IMR-90 (cell line): ENCODE measurements at regions of chr17 and their contacts with region 1.

Region 1: DNA sequence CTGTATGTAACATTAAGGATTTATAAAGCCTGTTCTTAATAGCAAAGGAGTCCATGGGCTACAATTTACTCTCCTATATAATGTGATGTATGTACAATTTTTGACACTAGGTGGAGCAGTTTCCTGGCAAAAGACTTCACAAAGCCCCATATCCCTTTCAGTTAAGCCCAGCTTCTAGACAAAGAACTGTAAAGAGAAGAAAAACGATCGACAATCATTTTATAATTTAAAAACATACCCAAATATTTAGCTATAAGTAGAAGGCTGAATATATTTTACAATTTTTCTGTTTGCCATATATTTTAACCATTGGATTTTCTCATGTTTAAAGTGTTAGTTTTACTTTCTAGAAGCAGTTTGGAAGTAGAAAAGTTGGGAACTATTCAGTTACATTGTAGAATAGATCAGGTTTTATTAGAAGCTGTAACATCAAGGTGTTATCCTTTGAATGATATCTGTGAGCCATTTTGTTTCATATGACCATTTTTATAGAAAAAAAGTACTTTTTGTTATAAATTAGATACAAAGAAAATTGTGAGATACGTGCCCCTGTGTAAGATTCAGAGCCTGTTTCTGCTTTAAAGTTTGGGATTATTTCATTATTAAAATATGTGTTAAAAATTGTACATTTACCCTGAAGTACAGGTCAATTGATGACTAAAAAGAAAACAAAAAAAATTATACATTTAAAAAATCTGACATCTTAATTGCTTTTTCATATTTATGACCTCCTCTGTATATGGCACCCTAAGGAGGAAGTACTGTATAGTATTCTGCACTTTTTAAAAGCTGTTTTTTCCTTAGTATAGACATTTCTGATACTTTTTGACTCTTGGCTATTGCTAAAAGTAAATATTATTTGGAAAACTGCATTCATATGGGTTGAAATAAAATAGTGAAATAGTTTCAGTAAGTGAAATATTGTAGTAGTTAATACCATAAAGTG is 46.3 kb downstream of the VMP1 start:
- DNase-seq: peak; percentile 93
- ATAC-seq: peak; percentile 74
- H3K4me3 ChIP-seq: no peak overlapping the region
- H3K27ac ChIP-seq: peak overlapping the region; percentile 78; the same call in 1 of the 2 replicates
- H3K4me1 ChIP-seq: peaks cover 14% of the 10 kb centered on the region
- H3K27me3 ChIP-seq: no peaks in the 10 kb centered on the region
- CTCF ChIP-seq: peak; percentile 81
- POLR2A ChIP-seq: peak; percentile 40; the same call in 1 of the 2 replicates
- RAD21 ChIP-seq: peak; percentile 94

Region 2: DNA sequence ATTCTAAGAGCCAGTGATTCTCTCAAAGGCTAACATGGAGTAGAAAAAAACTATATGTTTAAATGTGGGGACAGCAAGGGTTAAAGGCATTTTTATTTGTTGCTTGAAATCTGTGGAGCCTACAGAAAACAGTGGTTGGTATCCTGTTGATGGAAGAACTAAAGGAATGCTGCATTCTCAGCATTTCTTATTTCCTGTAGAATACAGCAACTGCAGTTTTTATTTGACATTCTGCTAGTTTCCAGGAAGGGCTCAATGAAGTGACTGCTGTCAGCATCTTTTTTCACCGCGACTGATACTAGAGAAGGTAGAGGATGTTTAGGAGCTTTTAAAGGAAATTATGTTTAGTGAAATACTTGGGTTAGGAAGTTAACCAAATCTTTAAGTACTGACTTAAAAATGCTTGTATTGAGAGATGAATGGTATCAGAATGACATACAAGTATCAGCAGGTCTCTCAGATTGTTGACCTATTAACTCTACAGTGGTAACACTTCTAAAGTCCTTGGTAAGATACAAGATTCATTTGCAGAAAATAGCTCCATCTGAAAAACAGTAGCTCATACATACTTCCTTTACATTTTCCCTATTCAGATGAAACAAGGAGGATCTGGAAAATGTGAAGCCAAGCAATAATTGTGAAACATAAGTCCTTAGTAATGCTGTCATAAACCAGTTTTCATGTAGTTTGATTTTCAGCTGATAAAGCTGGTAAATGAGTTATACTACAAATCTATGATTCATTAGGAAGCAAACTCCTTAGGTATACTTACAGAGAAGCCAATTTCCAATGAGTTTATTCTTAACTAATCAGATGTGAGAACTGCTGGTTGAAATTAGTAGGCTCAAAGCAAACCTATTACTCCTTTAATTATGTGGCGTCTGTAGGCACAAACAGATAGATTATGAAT is 118.9 kb before region 1 on chr17:
- CTCF ChIA-PET with region 1: no interaction called
- POLR2A ChIA-PET with region 1: no interaction called
- dilution Hi-C with region 1: no loop called
- in situ Hi-C with region 1: no loop called
- intact Hi-C with region 1: no loop called
- DNase-seq: no peak
- ATAC-seq: peak; percentile 61
- H3K4me3 ChIP-seq: no peak overlapping the region
- H3K27ac ChIP-seq: no peak overlapping the region
- H3K4me1 ChIP-seq: peaks cover 11% of the 10 kb centered on the region
- H3K27me3 ChIP-seq: no peaks in the 10 kb centered on the region
- CTCF ChIP-seq: no peak
- POLR2A ChIP-seq: no peak
- RAD21 ChIP-seq: no peak

Region 3: GRCh38 chr17:59769891-59770290 is 16.1 kb after region 1 on chr17:
- CTCF ChIA-PET with region 1: interaction called, 10 read pairs
- POLR2A ChIA-PET with region 1: no interaction called
- dilution Hi-C with region 1: no loop called
- in situ Hi-C with region 1: no loop called
- intact Hi-C with region 1: no loop called
- DNase-seq: no peak
- ATAC-seq: no peak
- H3K4me3 ChIP-seq: no peak overlapping the region
- H3K27ac ChIP-seq: no peak overlapping the region
- H3K4me1 ChIP-seq: peaks cover 19% of the 10 kb centered on the region
- H3K27me3 ChIP-seq: no peaks in the 10 kb centered on the region
- CTCF ChIP-seq: no peak
- POLR2A ChIP-seq: no peak
- RAD21 ChIP-seq: no peak

Region 4: GRCh38 chr17:59846394-59847165 is 92.8 kb after region 1 on chr17:
- CTCF ChIA-PET with region 1: no interaction called
- POLR2A ChIA-PET with region 1: interaction called, 87 read pairs
- dilution Hi-C with region 1: no loop called
- in situ Hi-C with region 1: no loop called
- intact Hi-C with region 1: loop called (anchors 1 kb)
- DNase-seq: peak; percentile 94
- ATAC-seq: no peak
- H3K4me3 ChIP-seq: no peak overlapping the region
- H3K27ac ChIP-seq: peak overlapping the region; percentile 90
- H3K4me1 ChIP-seq: peaks cover 16% of the 10 kb centered on the region
- H3K27me3 ChIP-seq: no peaks in the 10 kb centered on the region
- CTCF ChIP-seq: no peak
- POLR2A ChIP-seq: peak; percentile 63
- RAD21 ChIP-seq: no peak